Activated naive CD8-positive, alpha-beta T cell treated with anti-CD3 and anti-CD28 coated beads, Interleukin-2, amount 10 ng/mL, durations not matched to agents 7 days and 5 days (primary cell): ENCODE measurements at regions of chr7 and their contacts with region 1.

Region 1: DNA sequence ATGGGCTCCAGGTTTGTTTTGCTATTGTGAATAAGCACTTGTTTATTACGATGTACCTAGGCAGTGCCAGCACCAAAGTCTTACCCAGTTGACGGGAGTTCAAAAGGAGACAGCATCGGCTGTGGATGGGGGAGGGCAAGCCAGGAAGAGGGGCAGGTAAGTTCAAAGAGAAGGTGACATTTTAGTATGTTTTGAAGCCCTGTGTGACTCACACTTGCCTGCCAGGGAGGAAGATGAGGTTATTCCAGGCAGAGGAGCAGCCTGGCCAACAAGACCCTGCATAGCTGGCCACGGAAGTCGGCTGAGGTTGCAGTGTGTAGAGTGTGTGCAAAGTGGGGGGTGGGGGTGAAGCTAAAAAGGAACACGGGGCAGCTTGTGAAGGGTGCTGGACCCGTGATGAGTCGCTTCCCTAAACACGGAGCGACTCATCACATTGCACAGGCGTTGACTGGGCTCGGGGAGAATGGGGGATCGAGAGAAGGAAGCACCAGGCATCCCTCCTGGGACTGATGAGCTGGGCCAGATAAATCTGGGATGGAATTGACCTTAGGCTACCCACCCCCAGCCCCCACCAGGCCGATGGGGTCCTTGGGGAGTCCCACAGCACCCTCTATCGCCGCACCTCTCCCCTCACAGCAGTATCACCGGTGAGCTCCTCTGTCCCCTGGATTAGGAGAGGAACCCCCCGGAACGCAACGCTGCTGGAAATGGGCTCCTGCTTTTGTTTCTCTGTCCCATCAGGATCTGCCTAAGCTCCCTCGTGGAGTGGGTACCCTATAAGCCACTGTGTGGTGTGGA is 97.9 kb upstream of the IKZF1 start:
- DNase-seq: peak; percentile 74
- ATAC-seq: peak; percentile 88
- H3K4me3 Mint-ChIP-seq: peak overlapping the region; percentile 81
- H3K27ac Mint-ChIP-seq: peak overlapping the region; percentile 96
- H3K4me1 Mint-ChIP-seq: peaks cover 81% of the 10 kb centered on the region
- H3K27me3 Mint-ChIP-seq: no peaks in the 10 kb centered on the region

Region 2: DNA sequence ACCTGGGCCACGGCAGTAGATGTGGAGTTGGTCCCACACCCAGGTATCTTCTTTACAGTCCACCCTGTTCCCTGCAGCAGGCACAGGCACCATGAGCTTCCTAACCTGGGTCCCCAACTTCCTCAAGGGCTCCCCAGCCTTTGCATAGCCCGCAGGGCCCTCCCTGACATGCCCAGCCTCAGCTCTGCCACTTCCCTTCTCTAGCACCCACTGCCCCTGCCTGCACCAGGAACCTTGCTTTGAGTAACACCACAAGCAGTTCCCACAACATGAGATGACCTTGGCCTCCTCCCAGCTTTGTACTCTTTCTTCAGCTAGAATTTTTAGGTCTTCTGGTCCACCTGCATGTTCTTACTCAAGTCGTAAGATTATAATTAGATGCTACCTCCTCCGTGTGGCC is 21.4 kb before region 1 on chr7:
- POLR2A ChIA-PET with region 1: no interaction called
- DNase-seq: no peak
- ATAC-seq: no peak
- H3K4me3 Mint-ChIP-seq: no peak overlapping the region
- H3K27ac Mint-ChIP-seq: no peak overlapping the region
- H3K4me1 Mint-ChIP-seq: peaks cover 16% of the 10 kb centered on the region
- H3K27me3 Mint-ChIP-seq: no peaks in the 10 kb centered on the region

Region 3: GRCh38 chr7:50229964-50230363 is 23.3 kb after region 1 on chr7:
- POLR2A ChIA-PET with region 1: interaction called, 11 read pairs
- DNase-seq: no peak
- ATAC-seq: no peak
- H3K4me3 Mint-ChIP-seq: no peak overlapping the region
- H3K27ac Mint-ChIP-seq: no peak overlapping the region
- H3K4me1 Mint-ChIP-seq: peaks cover 39% of the 10 kb centered on the region
- H3K27me3 Mint-ChIP-seq: no peaks in the 10 kb centered on the region

Region 4: GRCh38 chr7:50266635-50267386 is 60.2 kb after region 1 on chr7:
- POLR2A ChIA-PET with region 1: interaction called, 68 read pairs
- DNase-seq: peak; percentile 80
- ATAC-seq: peak; percentile 65
- H3K4me3 Mint-ChIP-seq: peak overlapping the region; percentile 78
- H3K27ac Mint-ChIP-seq: peak overlapping the region; percentile 88
- H3K4me1 Mint-ChIP-seq: peaks cover 77% of the 10 kb centered on the region
- H3K27me3 Mint-ChIP-seq: no peaks in the 10 kb centered on the region

Region 5: GRCh38 chr7:50293509-50294179 is 87.0 kb after region 1 on chr7:
- POLR2A ChIA-PET with region 1: no interaction called
- DNase-seq: no peak
- ATAC-seq: no peak
- H3K4me3 Mint-ChIP-seq: no peak overlapping the region
- H3K27ac Mint-ChIP-seq: no peak overlapping the region
- H3K4me1 Mint-ChIP-seq: peaks cover 16% of the 10 kb centered on the region
- H3K27me3 Mint-ChIP-seq: peaks cover 2% of the 10 kb centered on the region

Region 6: DNA sequence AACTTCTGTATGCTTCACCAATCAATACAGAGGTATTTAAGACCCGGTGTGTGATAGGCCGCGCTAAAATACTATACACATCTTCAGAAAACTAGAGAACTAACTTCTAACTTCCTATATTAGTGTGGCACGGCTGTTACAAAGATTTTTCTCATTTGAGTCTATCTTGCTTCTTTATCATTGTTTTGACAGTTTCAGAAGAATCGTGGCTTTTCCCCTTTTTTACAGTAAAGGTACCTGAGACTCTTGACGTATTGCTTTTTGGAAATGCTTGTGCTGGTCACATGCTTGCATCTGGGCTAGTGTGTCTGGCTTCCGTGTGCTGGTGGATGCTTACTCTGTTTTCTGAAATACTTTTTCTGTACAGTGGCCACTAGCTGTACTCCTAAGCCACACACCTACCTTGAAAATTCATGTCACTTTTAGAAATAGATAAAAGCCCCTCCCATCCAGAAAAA is 110.6 kb after region 1 on chr7:
- POLR2A ChIA-PET with region 1: interaction called, 39 read pairs
- DNase-seq: no peak
- ATAC-seq: peak; percentile 76
- H3K4me3 Mint-ChIP-seq: peak overlapping the region; percentile 97
- H3K27ac Mint-ChIP-seq: peak overlapping the region; percentile 97
- H3K4me1 Mint-ChIP-seq: peaks cover 81% of the 10 kb centered on the region
- H3K27me3 Mint-ChIP-seq: no peaks in the 10 kb centered on the region

Region 7: GRCh38 chr7:50335795-50336754 is 129.4 kb after region 1 on chr7:
- POLR2A ChIA-PET with region 1: interaction called, 23 read pairs
- DNase-seq: peak; percentile 78
- ATAC-seq: peak; percentile 27
- H3K4me3 Mint-ChIP-seq: no peak overlapping the region
- H3K27ac Mint-ChIP-seq: no peak overlapping the region
- H3K4me1 Mint-ChIP-seq: peaks cover 61% of the 10 kb centered on the region
- H3K27me3 Mint-ChIP-seq: no peaks in the 10 kb centered on the region

Region 8: DNA sequence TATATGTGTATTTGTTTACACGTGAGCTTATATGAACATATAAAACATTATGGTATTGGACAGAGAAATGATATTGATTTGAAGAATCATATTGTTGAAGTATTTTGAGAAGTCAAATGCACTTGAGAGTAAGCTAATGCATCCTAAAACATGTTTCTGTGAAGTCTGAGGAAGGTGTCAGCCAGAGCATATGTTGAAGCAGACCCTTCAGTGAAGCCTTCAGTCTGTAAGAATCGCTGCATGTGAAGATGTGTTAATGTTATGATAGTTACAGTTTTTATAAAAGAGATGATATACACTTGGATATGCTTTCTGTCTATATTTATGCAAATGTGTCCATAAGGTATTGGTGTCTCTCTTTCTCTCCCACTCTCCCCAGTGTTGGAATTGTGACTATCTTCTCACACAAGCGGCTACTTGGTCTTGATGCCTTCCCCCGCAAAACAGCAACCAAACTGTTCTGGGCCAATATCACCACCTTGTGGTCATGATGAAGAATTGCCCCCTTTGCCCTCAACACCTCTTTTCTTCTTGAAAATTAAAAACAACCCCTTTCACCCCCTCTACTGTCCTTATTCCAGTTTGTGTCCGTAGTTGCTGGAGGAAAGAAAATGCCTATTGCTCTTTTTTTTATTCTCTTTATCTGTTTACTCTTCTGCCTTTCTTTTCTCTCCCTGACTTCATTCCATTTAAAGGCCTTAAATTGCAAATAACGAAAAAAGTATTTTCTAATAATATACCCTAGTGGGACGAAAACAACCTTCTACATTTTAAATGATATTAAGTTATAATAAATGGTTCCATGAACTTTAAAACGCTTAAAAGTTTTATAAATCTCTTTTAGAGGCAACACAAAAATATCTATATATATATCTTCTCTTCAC is 162.7 kb after region 1 on chr7:
- POLR2A ChIA-PET with region 1: interaction called, 27 read pairs
- DNase-seq: no peak
- ATAC-seq: peak; percentile 19
- H3K4me3 Mint-ChIP-seq: peak overlapping the region; percentile 67
- H3K27ac Mint-ChIP-seq: peak overlapping the region; percentile 78
- H3K4me1 Mint-ChIP-seq: peaks cover 82% of the 10 kb centered on the region
- H3K27me3 Mint-ChIP-seq: no peaks in the 10 kb centered on the region